CD4-positive, alpha-beta memory T cell (primary cell): ENCODE measurements at regions of chr16 and their contacts with region 1.

Region 1: DNA sequence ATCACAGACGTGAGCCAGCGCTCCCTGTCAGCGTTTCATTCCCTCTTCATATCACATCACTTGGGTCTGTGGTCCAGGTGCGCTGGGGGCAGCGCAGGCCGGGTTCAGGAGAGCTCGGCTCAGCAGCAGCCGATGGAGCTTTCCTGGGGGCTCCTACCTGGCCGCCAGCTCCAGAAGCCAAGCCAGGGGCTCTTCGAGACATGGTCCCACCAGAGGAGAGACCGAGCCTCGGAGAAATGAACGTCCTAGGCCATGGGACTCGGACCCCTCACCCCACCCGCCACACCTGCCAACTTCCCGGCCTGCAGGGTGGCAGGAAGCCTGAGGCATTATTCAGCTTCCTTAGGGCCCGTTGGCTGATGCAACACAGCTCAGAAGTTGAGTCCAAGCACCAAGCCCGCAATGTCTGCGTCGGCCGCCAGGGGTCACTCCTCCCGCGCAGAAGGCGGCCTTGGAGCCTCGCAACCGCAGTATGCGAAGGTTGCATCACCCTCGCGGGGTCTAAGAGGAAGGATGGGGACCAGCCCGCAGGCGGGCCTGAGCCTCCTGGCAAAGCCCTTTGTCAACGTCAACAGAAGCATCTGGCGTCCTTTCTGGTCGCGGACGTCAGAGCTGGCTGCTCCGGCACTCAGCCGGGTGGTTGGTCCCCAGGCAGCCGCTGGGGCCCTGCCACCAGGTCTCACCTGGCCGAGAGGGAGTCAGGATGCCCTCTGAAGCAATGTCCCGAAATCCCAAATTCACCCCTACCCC is 13.2 kb upstream of the KLHDC4 start:
- DNase-seq: peak; percentile 87 to 94 (median 88)
- H3K4me3 ChIP-seq: no peak overlapping the region
- H3K4me3 Mint-ChIP-seq: peak overlapping the region; percentile 20 to 90 (median 66)
- H3K27ac ChIP-seq: no peak overlapping the region
- H3K27ac Mint-ChIP-seq: peak overlapping the region; percentile 93 to 97 (median 95)
- H3K4me1 ChIP-seq: peaks cover 42% of the 10 kb centered on the region
- H3K4me1 Mint-ChIP-seq: peaks cover 23 to 43% (median 35%) of the 10 kb centered on the region in 4 donors
- H3K27me3 ChIP-seq: no peaks in the 10 kb centered on the region
- H3K27me3 Mint-ChIP-seq: no peaks in the 10 kb centered on the region

Region 2: GRCh38 chr16:87790278-87791032 is 11.4 kb after region 1 on chr16:
- CTCF ChIA-PET with region 1: interaction called, 63 read pairs
- POLR2A ChIA-PET with region 1: no interaction called
- intact Hi-C with region 1: no loop called
- DNase-seq: no peak
- H3K4me3 ChIP-seq: no peak overlapping the region
- H3K4me3 Mint-ChIP-seq: no peak overlapping the region
- H3K27ac ChIP-seq: no peak overlapping the region
- H3K27ac Mint-ChIP-seq: no peak overlapping the region
- H3K4me1 ChIP-seq: no peaks in the 10 kb centered on the region
- H3K4me1 Mint-ChIP-seq: no peaks in the 10 kb centered on the region
- H3K27me3 ChIP-seq: no peaks in the 10 kb centered on the region
- H3K27me3 Mint-ChIP-seq: no peaks in the 10 kb centered on the region

Region 3: GRCh38 chr16:87853411-87854052 is 74.5 kb after region 1 on chr16:
- CTCF ChIA-PET with region 1: interaction called, 97 read pairs
- POLR2A ChIA-PET with region 1: interaction called, 4 read pairs
- intact Hi-C with region 1: loop called (anchors 1 kb)
- DNase-seq: peak; percentile 71 to 96 (median 77)
- H3K4me3 ChIP-seq: peak overlapping the region in 1 of 2 donors; percentile 31
- H3K4me3 Mint-ChIP-seq: peak overlapping the region in 7 of 8 donors; percentile 57 to 85 (median 68)
- H3K27ac ChIP-seq: peak overlapping the region; percentile 17
- H3K27ac Mint-ChIP-seq: peak overlapping the region; percentile 57 to 93 (median 84)
- H3K4me1 ChIP-seq: peaks cover 54% of the 10 kb centered on the region
- H3K4me1 Mint-ChIP-seq: peaks cover 12 to 63% (median 32%) of the 10 kb centered on the region in 4 donors
- H3K27me3 ChIP-seq: no peaks in the 10 kb centered on the region
- H3K27me3 Mint-ChIP-seq: no peaks in the 10 kb centered on the region

Region 4: DNA sequence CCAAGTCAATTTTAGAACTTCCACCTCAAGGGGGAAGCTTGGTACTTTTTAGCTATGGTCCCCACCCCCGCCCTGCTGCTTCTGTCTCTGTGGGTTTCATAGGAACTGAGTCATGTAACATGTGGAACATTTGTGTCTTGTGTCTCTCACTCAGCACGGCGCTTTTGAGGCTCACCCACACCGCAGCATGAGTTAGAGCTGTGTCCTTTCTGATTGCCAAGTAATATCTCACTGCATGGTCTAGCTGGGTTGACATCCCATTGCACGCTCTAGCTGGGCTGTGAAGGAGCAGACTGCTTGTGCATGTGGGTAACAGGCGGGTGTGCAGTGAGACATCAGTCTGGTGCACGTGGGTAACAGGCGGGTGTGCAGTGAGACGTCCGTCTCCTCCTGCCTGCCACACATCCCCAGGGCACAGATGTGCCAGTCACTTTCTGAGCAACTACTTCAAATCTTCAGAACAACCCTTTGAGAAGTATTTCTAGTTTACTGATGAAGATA is 116.7 kb after region 1 on chr16:
- CTCF ChIA-PET with region 1: interaction called, 36 read pairs
- POLR2A ChIA-PET with region 1: interaction called, 7 read pairs
- intact Hi-C with region 1: no loop called
- DNase-seq: peak in 4 of 5 donors; percentile 17 to 86 (median 27)
- H3K4me3 ChIP-seq: no peak overlapping the region
- H3K4me3 Mint-ChIP-seq: peak overlapping the region in 6 of 8 donors; percentile 36 to 83 (median 68)
- H3K27ac ChIP-seq: peak overlapping the region; percentile 13
- H3K27ac Mint-ChIP-seq: peak overlapping the region; percentile 66 to 93 (median 89)
- H3K4me1 ChIP-seq: peaks cover 34% of the 10 kb centered on the region
- H3K4me1 Mint-ChIP-seq: peaks cover 22 to 37% (median 29%) of the 10 kb centered on the region in 4 donors
- H3K27me3 ChIP-seq: no peaks in the 10 kb centered on the region
- H3K27me3 Mint-ChIP-seq: no peaks in the 10 kb centered on the region

Region 5: DNA sequence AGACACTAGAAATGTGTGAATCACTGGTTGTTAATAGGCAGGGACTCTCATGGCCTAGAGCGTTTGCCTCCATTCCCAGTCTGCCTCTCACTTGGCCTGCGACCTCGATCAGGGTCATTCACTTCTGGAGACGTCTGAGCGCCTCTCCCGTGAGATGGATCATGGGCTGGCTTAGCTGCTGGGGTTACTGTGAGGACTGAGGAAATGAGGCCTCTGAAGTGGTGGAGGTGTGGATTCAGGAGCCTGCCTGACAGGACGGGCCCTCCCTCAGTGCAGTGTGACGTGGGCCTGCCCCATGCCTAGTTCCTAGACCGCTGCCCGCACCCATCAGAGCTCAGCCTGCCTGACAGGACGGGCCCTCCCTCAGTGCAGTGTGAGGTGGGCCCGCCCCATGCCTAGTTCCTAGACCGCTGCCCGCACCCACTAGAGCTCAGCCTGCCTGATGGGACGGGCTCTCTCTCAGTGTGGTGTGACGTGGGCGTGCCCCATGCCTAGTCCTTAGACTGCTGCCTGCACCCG is 234.1 kb after region 1 on chr16:
- CTCF ChIA-PET with region 1: no interaction called
- POLR2A ChIA-PET with region 1: no interaction called
- intact Hi-C with region 1: no loop called
- DNase-seq: no peak
- H3K4me3 ChIP-seq: no peak overlapping the region
- H3K4me3 Mint-ChIP-seq: no peak overlapping the region
- H3K27ac ChIP-seq: no peak overlapping the region
- H3K27ac Mint-ChIP-seq: no peak overlapping the region
- H3K4me1 ChIP-seq: no peaks in the 10 kb centered on the region
- H3K4me1 Mint-ChIP-seq: peaks cover 0 to 3% (median under 1%) of the 10 kb centered on the region in 4 donors
- H3K27me3 ChIP-seq: no peaks in the 10 kb centered on the region
- H3K27me3 Mint-ChIP-seq: no peaks in the 10 kb centered on the region

Region 6: DNA sequence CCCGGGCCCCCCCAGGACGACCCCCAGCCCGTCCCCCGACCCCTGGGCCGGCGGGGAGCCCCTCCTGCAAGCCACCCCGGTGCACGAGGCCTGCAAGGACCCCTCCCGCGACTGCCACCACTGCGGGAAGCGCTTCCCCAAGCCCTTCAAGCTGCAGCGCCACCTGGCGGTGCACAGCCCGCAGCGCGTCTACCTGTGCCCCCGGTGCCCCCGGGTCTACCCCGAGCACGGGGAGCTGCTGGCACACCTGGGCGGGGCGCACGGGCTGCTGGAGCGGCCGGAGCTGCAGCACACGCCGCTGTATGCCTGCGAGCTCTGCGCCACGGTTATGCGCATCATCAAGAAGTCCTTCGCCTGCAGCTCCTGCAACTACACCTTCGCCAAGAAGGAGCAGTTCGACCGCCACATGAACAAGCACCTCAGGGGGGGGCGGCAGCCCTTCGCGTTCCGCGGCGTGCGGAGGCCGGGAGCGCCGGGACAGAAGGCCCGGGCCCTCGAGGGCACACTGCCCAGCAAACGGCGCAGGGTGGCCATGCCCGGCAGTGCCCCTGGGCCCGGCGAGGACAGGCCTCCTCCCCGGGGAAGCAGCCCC is 658.5 kb after region 1 on chr16:
- CTCF ChIA-PET with region 1: interaction called, 7 read pairs
- POLR2A ChIA-PET with region 1: no interaction called
- intact Hi-C with region 1: loop called (anchors 2 kb)
- DNase-seq: peak in 4 of 5 donors; percentile 51 to 59 (median 54)
- H3K4me3 ChIP-seq: no peak overlapping the region
- H3K4me3 Mint-ChIP-seq: no peak overlapping the region
- H3K27ac ChIP-seq: no peak overlapping the region
- H3K27ac Mint-ChIP-seq: no peak overlapping the region
- H3K4me1 ChIP-seq: no peaks in the 10 kb centered on the region
- H3K4me1 Mint-ChIP-seq: no peaks in the 10 kb centered on the region
- H3K27me3 ChIP-seq: no peaks in the 10 kb centered on the region
- H3K27me3 Mint-ChIP-seq: no peaks in the 10 kb centered on the region